ENCODE measurements at regions of chr17 and their contacts with region 1.

Region 1: DNA sequence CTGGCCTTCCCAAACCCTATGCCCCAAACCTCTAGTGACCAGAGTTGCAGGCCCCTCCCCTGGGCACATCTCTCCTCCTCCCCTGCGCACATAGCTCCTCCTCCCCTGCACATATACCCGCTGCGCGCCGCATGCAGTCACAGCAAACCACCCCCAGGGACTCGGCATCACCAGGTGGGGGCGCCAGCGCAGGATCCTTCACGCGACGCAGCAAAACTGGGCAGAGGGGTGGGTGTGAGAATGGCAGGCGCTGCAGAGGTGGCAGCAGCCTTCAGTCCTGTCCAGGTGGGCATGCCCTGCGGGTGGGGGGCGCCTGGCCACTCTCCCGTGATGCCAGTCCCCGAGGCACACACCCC is 5.6 kb downstream of the CORO6 start:
- DNase-seq: peak; percentile 86
- ATAC-seq: peak; percentile 27
- H3K4me3 Mint-ChIP-seq: peak overlapping the region; percentile 80
- H3K27ac Mint-ChIP-seq: no peak overlapping the region
- H3K4me1 Mint-ChIP-seq: peaks cover 53% of the 10 kb centered on the region
- H3K27me3 Mint-ChIP-seq: peaks cover 80% of the 10 kb centered on the region
- CTCF ChIP-seq: peak; percentile 49

Region 2: GRCh38 chr17:29561554-29562517 is 55.3 kb before region 1 on chr17:
- CTCF ChIA-PET with region 1: interaction called, 112 read pairs
- POLR2A ChIA-PET with region 1: no interaction called
- DNase-seq: peak; percentile 8
- ATAC-seq: no peak
- H3K4me3 Mint-ChIP-seq: no peak overlapping the region
- H3K27ac Mint-ChIP-seq: no peak overlapping the region
- H3K4me1 Mint-ChIP-seq: peaks cover 8% of the 10 kb centered on the region
- H3K27me3 Mint-ChIP-seq: peaks cover 32% of the 10 kb centered on the region
- CTCF ChIP-seq: no peak

Region 3: DNA sequence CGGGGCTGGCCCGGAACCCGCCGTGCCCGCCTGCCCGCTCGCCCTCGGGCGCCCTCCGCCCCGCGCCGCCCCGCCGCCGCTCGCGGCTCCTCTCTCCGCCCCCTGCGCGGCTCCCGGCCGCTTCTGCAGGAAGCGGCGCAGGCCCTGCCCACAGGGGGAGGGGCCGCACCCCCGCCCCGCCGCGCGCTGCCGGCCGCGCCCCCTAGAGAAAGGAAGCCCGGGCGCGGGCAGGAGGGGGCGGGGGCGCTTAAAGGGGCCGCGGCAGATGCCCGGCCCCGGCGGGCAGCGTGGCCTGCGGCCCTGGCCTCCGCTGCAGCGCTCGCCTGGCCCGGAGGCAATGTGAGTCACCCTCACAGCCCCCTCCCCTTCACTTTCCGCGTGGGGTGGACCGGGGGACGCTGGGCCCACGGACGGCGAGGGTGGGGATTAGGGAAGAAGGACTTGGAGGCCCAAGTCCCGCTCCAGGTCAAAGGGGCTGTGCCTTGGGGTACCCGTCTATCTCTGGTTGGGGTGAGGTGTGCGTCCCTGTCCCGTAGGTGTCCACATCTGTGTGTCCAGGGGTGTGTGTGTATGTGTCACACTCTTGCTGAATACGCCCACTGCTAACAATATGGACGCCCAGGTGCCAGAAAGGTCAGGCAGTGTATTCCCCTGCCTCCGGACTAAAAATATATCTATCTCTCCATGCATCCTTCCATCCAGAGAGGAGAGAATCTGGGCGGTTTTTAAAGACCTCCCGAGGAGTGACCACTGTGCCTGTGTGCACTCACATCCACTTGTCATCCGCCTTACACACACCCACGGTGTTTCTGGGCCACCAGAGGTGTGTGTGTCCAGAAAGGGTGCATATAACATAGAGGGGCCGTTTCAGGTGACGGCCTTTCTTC is 27.3 kb before region 1 on chr17 and contains the start of gene GIT1:
- CTCF ChIA-PET with region 1: interaction called, 272 read pairs
- POLR2A ChIA-PET with region 1: interaction called, 12 read pairs
- DNase-seq: peak; percentile 79
- ATAC-seq: peak; percentile 35
- H3K4me3 Mint-ChIP-seq: peak within 1 kb of the TSS; percentile 87
- H3K27ac Mint-ChIP-seq: no peak within 1 kb of the TSS
- H3K4me1 Mint-ChIP-seq: peaks cover 51% of the 10 kb centered on the region
- H3K27me3 Mint-ChIP-seq: peaks cover 4% of the 10 kb centered on the region; the same call in 1 of the 2 replicates
- CTCF ChIP-seq: no peak
- total RNA-seq, gene GIT1: 43.9 to 66.9 TPM (median 45.0 TPM) in 3 replicates

Region 4: DNA sequence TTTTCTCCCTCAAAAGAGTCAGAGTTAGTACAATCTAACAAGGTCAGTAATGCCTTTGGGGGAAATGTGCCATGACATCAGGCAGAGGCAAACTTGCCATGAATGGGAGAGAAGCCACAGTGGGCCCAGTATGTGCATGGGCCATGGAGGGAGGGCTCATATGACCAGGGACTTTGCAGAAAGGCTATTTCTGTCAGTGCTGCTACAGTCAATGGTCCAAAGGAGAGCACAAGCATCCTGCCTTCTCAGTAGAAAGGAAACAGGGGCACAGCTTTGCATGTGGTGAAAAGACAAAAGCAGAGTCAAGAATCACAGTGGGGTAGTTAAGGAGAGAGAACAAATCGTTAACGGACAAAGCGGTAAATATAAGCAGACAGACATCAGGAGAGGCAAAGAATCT is 16.8 kb after region 1 on chr17:
- CTCF ChIA-PET with region 1: interaction called, 58 read pairs
- POLR2A ChIA-PET with region 1: no interaction called
- DNase-seq: no peak
- ATAC-seq: peak; percentile 70
- H3K4me3 Mint-ChIP-seq: no peak overlapping the region
- H3K27ac Mint-ChIP-seq: no peak overlapping the region
- H3K4me1 Mint-ChIP-seq: peaks cover 8% of the 10 kb centered on the region
- H3K27me3 Mint-ChIP-seq: no peaks in the 10 kb centered on the region
- CTCF ChIP-seq: no peak

Region 5: GRCh38 chr17:29760761-29761696 is 143.9 kb after region 1 on chr17:
- CTCF ChIA-PET with region 1: interaction called, 15 read pairs
- POLR2A ChIA-PET with region 1: no interaction called
- DNase-seq: peak; percentile 77
- ATAC-seq: peak; percentile 89
- H3K4me3 Mint-ChIP-seq: peak overlapping the region; percentile 83
- H3K27ac Mint-ChIP-seq: no peak overlapping the region; the same call in 1 of the 2 replicates
- H3K4me1 Mint-ChIP-seq: peaks cover 14% of the 10 kb centered on the region
- H3K27me3 Mint-ChIP-seq: peaks cover 21% of the 10 kb centered on the region
- CTCF ChIP-seq: no peak

Region 6: GRCh38 chr17:29931231-29931932 is 314.3 kb after region 1 on chr17:
- CTCF ChIA-PET with region 1: interaction called, 34 read pairs
- POLR2A ChIA-PET with region 1: interaction called, 3 read pairs
- DNase-seq: peak; percentile 23
- ATAC-seq: peak; percentile 10
- H3K4me3 Mint-ChIP-seq: no peak overlapping the region
- H3K27ac Mint-ChIP-seq: no peak overlapping the region
- H3K4me1 Mint-ChIP-seq: peaks cover 12% of the 10 kb centered on the region
- H3K27me3 Mint-ChIP-seq: no peaks in the 10 kb centered on the region
- CTCF ChIP-seq: peak; percentile 61; the same call in 1 of the 2 replicates

Measured in WTC11 (cell line).